Gastrocnemius medialis (tissue), 4 donors: ENCODE measurements at regions of chr6 and their contacts with region 1.

Region 1: DNA sequence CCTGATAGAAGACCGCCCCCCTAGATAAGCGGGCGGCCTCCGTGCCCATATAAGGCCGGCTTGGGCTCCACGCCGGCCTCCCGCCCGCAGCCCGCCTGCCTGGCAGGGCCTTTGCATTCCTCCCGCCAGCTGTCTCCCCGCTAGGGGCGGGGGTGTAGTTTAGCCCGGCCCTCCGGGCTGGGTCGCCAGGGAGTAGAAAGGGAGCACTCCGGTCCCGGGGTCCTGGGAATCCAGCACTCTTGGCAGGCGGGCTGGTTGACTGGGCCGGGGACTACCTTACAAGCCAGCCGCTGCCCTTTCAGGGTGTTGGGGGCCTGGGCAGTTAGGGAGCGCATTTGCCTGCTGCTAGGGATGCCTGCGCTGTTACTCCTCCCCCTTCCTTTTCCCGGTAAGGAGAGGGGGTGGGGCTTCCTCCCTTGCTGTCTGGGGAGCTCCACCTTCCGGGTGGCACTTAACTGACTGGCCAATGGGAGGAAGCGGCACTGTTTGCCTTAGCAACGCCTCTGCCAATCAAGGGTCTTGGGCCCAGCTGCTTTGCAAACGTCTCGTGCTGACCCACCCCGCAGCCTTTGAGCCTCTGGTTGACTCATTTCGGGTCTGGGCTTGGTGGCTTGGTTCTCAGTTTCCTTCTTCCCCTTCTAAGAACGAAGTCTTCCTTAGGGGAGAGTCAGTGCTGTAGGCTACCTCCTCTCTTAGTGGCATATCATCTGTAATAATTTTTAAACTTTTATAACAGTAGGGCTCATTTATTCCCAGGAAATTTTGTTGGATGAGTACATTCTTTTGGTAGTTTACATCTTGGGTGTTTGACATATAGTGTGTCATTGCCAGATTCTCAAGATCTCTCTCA is 3.4 kb downstream of the SRF start:
- DNase-seq: peak; percentile 99
- ATAC-seq: peak; percentile 77 to 79
- H3K4me3 ChIP-seq: peak overlapping the region; percentile 51 to 88 (median 65)
- H3K27ac ChIP-seq: peak overlapping the region; percentile 89 to 98 (median 92)
- H3K4me1 ChIP-seq: peaks cover 30 to 41% of the 10 kb centered on the region in 2 donors
- H3K27me3 ChIP-seq: no peaks in the 10 kb centered on the region
- CTCF ChIP-seq: peak in 3 of 5 experiments; percentile 28 to 48 (median 36)
- POLR2A ChIP-seq: peak; percentile 64 to 82

Region 2: GRCh38 chr6:41735427-41736356 is 1438.8 kb before region 1 on chr6 and contains the start of gene TFEB:
- in situ Hi-C with region 1: no loop called
- intact Hi-C with region 1: loop called (anchors 10 kb)
- DNase-seq: peak; percentile 92 to 93
- ATAC-seq: peak; percentile 43 to 51
- H3K4me3 ChIP-seq: peak within 1 kb of the TSS; percentile 76 to 97 (median 90)
- H3K27ac ChIP-seq: peak within 1 kb of the TSS; percentile 97 to 99 (median 98)
- H3K4me1 ChIP-seq: peaks cover 12 to 19% of the 10 kb centered on the region in 2 donors
- H3K27me3 ChIP-seq: no peaks in the 10 kb centered on the region
- CTCF ChIP-seq: peak; percentile 91 to 100 (median 100)
- POLR2A ChIP-seq: peak; percentile 94 to 97
- total RNA-seq, gene TFEB: 82.8 to 121 (median 93.3) TPM

Region 3: GRCh38 chr6:42782622-42783176 is 391.8 kb before region 1 on chr6:
- in situ Hi-C with region 1: no loop called
- intact Hi-C with region 1: loop called (anchors 5 kb)
- DNase-seq: peak; percentile 65 to 71
- ATAC-seq: peak; percentile 38 to 55
- H3K4me3 ChIP-seq: peak overlapping the region; percentile 72 to 96 (median 91)
- H3K27ac ChIP-seq: peak overlapping the region; percentile 95 to 100 (median 98)
- H3K4me1 ChIP-seq: peaks cover 27 to 38% of the 10 kb centered on the region in 2 donors
- H3K27me3 ChIP-seq: no peaks in the 10 kb centered on the region
- CTCF ChIP-seq: peak in 1 of 5 experiments; percentile 4
- POLR2A ChIP-seq: peak; percentile 83 to 90

Region 4: DNA sequence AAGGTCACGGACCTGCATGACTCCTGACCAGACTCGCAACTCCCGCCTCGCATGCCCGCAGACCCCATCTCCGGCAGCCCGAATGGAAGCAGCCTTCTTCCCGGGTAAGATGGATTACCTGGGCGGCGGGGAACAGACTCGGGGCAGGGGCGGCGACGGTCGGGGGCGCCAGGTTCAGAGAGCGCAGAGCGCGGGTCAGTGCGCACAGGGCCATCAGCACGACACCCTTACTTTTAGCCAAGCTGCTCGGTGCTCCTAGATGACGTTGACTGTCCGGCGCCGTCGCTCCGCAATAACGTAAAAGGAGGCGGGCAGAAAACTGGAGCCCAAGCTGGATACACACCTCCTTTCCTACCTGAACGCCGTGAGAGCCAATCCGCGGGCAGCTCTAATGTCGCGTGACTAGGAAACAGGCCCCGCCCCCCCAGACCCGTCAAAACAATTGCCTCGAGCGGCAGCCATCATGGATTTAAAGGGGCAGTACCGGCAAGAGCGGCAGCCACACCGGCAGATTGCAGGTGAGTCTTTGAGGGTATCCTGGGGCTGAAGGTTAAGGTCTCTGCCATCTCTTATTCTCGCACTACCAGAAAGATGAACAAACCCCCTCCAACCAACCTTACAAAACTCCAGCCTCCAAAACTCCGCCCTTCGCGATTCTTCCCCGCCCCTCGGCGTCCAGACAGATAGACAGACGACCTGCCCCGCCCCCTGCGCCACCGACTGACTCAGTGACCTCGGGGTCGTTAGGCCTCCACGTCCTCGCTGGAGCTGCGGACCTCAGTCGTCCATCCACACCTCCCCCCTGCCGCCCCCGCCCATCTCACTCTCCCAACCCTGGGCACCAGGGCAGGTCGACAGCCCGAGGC is 115.1 kb before region 1 on chr6 and contains the starts of genes KLC4 and MRPL2:
- in situ Hi-C with region 1: no loop called
- intact Hi-C with region 1: loop called (anchors 1 kb)
- DNase-seq: peak; percentile 99
- ATAC-seq: peak; percentile 94 to 97
- H3K4me3 ChIP-seq: peak within 1 kb of the TSS; percentile 87 to 98 (median 92)
- H3K27ac ChIP-seq: peak within 1 kb of the TSS; percentile 90 to 99 (median 95)
- H3K4me1 ChIP-seq: peaks cover 24 to 30% of the 10 kb centered on the region in 2 donors
- H3K27me3 ChIP-seq: no peaks in the 10 kb centered on the region
- CTCF ChIP-seq: no peak
- POLR2A ChIP-seq: peak; percentile 72 to 88
- total RNA-seq, gene KLC4: 12.2 to 19.3 (median 14.6) TPM
- total RNA-seq, gene MRPL2: 34.1 to 64.9 (median 41.1) TPM

Region 5: GRCh38 chr6:43211955-43212354 is 37.5 kb after region 1 on chr6:
- in situ Hi-C with region 1: no loop called
- intact Hi-C with region 1: no loop called
- DNase-seq: no peak
- ATAC-seq: no peak
- H3K4me3 ChIP-seq: no peak overlapping the region
- H3K27ac ChIP-seq: no peak overlapping the region
- H3K4me1 ChIP-seq: no peaks in the 10 kb centered on the region
- H3K27me3 ChIP-seq: no peaks in the 10 kb centered on the region
- CTCF ChIP-seq: no peak
- POLR2A ChIP-seq: no peak

Region 6: GRCh38 chr6:43427406-43428111 is 253.1 kb after region 1 on chr6 and contains the start of gene ABCC10:
- in situ Hi-C with region 1: no loop called
- intact Hi-C with region 1: loop called (anchors 5 kb)
- DNase-seq: peak; percentile 85 to 92
- ATAC-seq: peak; percentile 98
- H3K4me3 ChIP-seq: peak within 1 kb of the TSS; percentile 81 to 92 (median 90)
- H3K27ac ChIP-seq: peak within 1 kb of the TSS; percentile 82 to 87 (median 87)
- H3K4me1 ChIP-seq: peaks cover 13 to 15% of the 10 kb centered on the region in 2 donors
- H3K27me3 ChIP-seq: no peaks in the 10 kb centered on the region
- CTCF ChIP-seq: peak in 2 of 5 experiments; percentile 51 to 53
- POLR2A ChIP-seq: peak; percentile 36 to 53
- total RNA-seq, gene ABCC10: 5.3 to 11.8 (median 8.6) TPM

Region 7: GRCh38 chr6:43900911-43901732 is 726.6 kb after region 1 on chr6:
- in situ Hi-C with region 1: no loop called
- intact Hi-C with region 1: no loop called
- DNase-seq: peak in 1 of 2 donors; percentile 46
- ATAC-seq: peak; percentile 74 to 79
- H3K4me3 ChIP-seq: no peak overlapping the region
- H3K27ac ChIP-seq: peak overlapping the region in 1 of 4 donors; percentile 42
- H3K4me1 ChIP-seq: peaks cover 0 to 9% of the 10 kb centered on the region in 2 donors
- H3K27me3 ChIP-seq: no peaks in the 10 kb centered on the region
- CTCF ChIP-seq: no peak
- POLR2A ChIP-seq: no peak

Region 8: GRCh38 chr6:44246663-44247337 is 1072.3 kb after region 1 on chr6 and contains the start of gene HSP90AB1:
- in situ Hi-C with region 1: no loop called
- intact Hi-C with region 1: loop called (anchors 2 kb)
- DNase-seq: peak; percentile 97 to 99
- ATAC-seq: peak; percentile 86 to 88
- H3K4me3 ChIP-seq: peak within 1 kb of the TSS; percentile 78 to 98 (median 88)
- H3K27ac ChIP-seq: peak within 1 kb of the TSS; percentile 93 to 99 (median 98)
- H3K4me1 ChIP-seq: peaks cover 25 to 27% of the 10 kb centered on the region in 2 donors
- H3K27me3 ChIP-seq: no peaks in the 10 kb centered on the region
- CTCF ChIP-seq: peak in 1 of 5 experiments; percentile 26
- POLR2A ChIP-seq: peak; percentile 99
- total RNA-seq, gene HSP90AB1: 878 to 1,576 (median 1,106) TPM